ENCODE measurements at regions of chr12 and their contacts with region 1.

Region 1: GRCh38 chr12:614411-614970 is 48.8 kb downstream of the NINJ2 start:
- DNase-seq: peak; percentile 62
- ATAC-seq: peak; percentile 68
- H3K4me3 ChIP-seq: no peak overlapping the region
- H3K4me3 Mint-ChIP-seq: no peak overlapping the region
- H3K27ac ChIP-seq: no peak overlapping the region
- H3K27ac Mint-ChIP-seq: no peak overlapping the region
- H3K4me1 ChIP-seq: peaks cover 20 to 21% of the 10 kb centered on the region in 2 donors
- H3K4me1 Mint-ChIP-seq: peaks cover 24% of the 10 kb centered on the region
- H3K27me3 ChIP-seq: no peaks in the 10 kb centered on the region
- H3K27me3 Mint-ChIP-seq: no peaks in the 10 kb centered on the region
- CTCF ChIP-seq: peak; percentile 45

Region 2: GRCh38 chr12:321607-322326 is 292.7 kb before region 1 on chr12:
- CTCF ChIA-PET with region 1: no interaction called
- POLR2A ChIA-PET with region 1: no interaction called
- intact Hi-C with region 1: no loop called
- DNase-seq: no peak
- ATAC-seq: no peak
- H3K4me3 ChIP-seq: no peak overlapping the region
- H3K4me3 Mint-ChIP-seq: no peak overlapping the region
- H3K27ac ChIP-seq: no peak overlapping the region
- H3K27ac Mint-ChIP-seq: no peak overlapping the region
- H3K4me1 ChIP-seq: no peaks in the 10 kb centered on the region
- H3K4me1 Mint-ChIP-seq: no peaks in the 10 kb centered on the region
- H3K27me3 ChIP-seq: no peaks in the 10 kb centered on the region
- H3K27me3 Mint-ChIP-seq: no peaks in the 10 kb centered on the region
- CTCF ChIP-seq: no peak

Region 3: DNA sequence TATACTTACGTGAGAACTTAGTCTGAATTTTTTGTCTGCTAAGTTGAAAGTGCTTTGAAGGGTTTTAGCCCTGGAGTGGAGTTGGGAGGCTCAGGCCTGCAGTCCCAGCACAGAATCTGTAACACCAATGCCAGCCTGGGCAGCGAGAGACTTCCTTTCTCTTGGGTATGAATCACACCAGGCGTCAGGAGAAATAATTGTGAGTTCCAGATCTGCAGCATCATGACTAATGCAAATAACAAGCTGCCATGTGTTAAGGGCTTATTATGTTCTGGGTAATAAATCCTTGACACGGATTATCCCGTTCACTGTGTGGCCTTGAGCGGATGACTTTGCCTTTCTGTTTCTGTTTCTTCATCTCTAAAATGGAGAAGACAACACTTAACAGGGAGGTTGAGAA is 84.2 kb before region 1 on chr12:
- CTCF ChIA-PET with region 1: no interaction called
- POLR2A ChIA-PET with region 1: no interaction called
- intact Hi-C with region 1: no loop called
- DNase-seq: no peak
- ATAC-seq: no peak
- H3K4me3 ChIP-seq: no peak overlapping the region
- H3K4me3 Mint-ChIP-seq: no peak overlapping the region
- H3K27ac ChIP-seq: no peak overlapping the region
- H3K27ac Mint-ChIP-seq: no peak overlapping the region
- H3K4me1 ChIP-seq: no peaks in the 10 kb centered on the region
- H3K4me1 Mint-ChIP-seq: no peaks in the 10 kb centered on the region
- H3K27me3 ChIP-seq: peaks cover 0 to 3% (median 0%) of the 10 kb centered on the region in 4 experiments
- H3K27me3 Mint-ChIP-seq: peaks cover 14% of the 10 kb centered on the region
- CTCF ChIP-seq: no peak

Region 4: DNA sequence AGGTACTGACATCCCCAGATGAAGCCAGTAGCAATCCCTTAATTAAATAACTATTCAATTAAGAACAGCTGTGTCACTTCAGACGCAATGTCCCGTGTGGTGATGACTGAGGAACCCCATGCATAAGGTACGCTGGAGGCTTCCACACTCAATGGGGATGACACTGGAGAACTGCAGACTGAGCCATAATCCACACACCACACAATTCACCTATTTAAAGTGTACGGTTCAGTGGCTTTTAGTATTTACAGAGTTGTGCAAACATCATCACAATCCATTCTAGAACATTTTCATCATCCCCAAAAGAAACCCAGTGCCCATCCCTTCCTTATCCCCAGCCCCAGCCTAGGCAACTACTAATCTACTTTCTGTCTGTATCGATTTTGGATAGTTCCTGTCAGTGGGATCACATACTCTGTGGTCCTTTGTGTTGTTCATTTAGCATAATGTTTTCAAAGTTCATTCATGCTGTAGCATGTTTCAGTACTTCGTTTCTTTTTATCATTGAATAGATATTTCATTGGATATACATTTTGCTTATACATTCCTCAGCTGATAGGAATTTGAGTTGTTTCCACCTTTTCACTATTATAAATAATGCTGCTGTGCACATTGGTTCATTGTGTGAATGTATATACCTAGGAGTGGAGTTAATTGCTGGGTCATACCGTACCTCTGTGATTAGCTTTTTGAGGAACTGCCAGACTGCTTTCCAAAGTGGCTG is 12.4 kb before region 1 on chr12:
- CTCF ChIA-PET with region 1: interaction called, 18 read pairs
- POLR2A ChIA-PET with region 1: no interaction called
- intact Hi-C with region 1: no loop called
- DNase-seq: no peak
- ATAC-seq: no peak
- H3K4me3 ChIP-seq: no peak overlapping the region
- H3K4me3 Mint-ChIP-seq: no peak overlapping the region
- H3K27ac ChIP-seq: no peak overlapping the region
- H3K27ac Mint-ChIP-seq: no peak overlapping the region
- H3K4me1 ChIP-seq: no peaks in the 10 kb centered on the region
- H3K4me1 Mint-ChIP-seq: no peaks in the 10 kb centered on the region
- H3K27me3 ChIP-seq: no peaks in the 10 kb centered on the region
- H3K27me3 Mint-ChIP-seq: no peaks in the 10 kb centered on the region
- CTCF ChIP-seq: no peak

Region 5: DNA sequence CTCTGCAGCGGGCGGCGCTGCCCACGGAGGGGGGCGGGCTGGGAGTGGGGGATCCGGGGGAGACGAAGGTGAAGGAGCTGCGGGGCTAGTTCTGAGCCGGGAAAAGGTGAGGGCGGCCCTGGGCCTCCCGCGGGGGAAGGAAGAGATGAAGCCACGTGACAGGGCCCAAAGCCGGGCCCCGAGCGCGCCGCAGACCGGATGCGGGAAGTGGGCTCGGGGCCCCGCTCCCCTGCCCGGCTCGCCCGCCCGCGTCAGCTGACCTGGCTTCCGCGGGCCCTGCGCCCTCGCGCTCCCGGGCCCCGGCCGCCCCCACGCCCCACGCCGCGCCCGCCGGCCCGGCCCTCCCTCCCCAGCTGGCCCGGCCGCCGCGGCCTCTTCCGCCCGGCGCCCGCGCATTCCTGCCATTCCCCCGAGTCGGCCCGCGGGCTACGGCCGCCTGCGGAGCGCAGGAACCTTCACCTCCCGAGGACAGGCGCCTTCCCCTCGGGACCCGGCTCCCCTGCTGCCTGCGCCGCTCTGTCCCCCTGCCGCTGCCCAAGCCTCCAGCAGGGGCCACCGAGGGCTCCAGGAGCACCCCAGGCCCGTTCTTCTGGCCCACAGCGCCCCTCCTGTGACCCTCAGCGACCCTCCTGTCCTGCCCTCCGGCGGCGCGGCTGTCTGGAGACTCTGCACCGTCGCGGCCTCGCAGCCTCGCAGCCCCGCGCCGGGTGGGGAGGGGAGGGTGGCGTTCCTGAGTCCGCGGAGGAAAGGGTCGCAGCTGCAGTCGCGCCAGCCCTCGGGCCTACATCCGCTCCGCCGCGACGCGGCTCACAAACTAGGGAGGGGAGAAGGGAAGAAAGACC is 28.4 kb after region 1 on chr12:
- CTCF ChIA-PET with region 1: interaction called, 11 read pairs
- POLR2A ChIA-PET with region 1: no interaction called
- intact Hi-C with region 1: no loop called
- DNase-seq: peak; percentile 86
- ATAC-seq: peak; percentile 75
- H3K4me3 ChIP-seq: peak overlapping the region; percentile 56 to 80 (median 78)
- H3K4me3 Mint-ChIP-seq: peak overlapping the region; percentile 89
- H3K27ac ChIP-seq: peak overlapping the region; percentile 94 to 96
- H3K27ac Mint-ChIP-seq: peak overlapping the region; percentile 99
- H3K4me1 ChIP-seq: peaks cover 28 to 43% of the 10 kb centered on the region in 2 donors
- H3K4me1 Mint-ChIP-seq: peaks cover 51% of the 10 kb centered on the region
- H3K27me3 ChIP-seq: no peaks in the 10 kb centered on the region
- H3K27me3 Mint-ChIP-seq: no peaks in the 10 kb centered on the region
- CTCF ChIP-seq: peak; percentile 43

Region 6: DNA sequence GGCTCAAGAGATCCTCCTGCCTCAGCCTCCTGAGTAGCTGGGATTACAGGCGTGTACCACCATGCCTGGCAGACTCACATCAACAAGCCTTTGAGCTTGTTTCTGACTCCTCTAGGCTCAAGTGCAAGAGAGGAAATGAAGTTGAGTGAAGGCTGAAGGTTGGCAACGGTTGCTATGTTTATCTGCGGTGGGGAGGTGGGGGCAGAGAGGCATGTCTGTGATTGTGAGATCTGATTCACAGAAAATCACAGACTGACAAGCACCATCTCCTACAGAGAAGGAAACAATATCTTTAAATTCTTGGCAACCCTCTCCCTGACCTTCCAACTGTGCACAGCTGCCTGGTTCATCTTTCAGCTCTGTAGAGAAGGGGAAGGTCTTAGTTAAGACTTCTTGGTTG is 70.9 kb after region 1 on chr12:
- CTCF ChIA-PET with region 1: interaction called, 14 read pairs
- POLR2A ChIA-PET with region 1: interaction called, 3 read pairs
- intact Hi-C with region 1: no loop called
- DNase-seq: peak; percentile 93
- ATAC-seq: peak; percentile 78
- H3K4me3 ChIP-seq: peak overlapping the region in 4 of 5 experiments; percentile 5 to 31 (median 21)
- H3K4me3 Mint-ChIP-seq: peak overlapping the region; percentile 75
- H3K27ac ChIP-seq: peak overlapping the region; percentile 93 to 98
- H3K27ac Mint-ChIP-seq: peak overlapping the region; percentile 100
- H3K4me1 ChIP-seq: peaks cover 45 to 53% of the 10 kb centered on the region in 2 donors
- H3K4me1 Mint-ChIP-seq: peaks cover 49% of the 10 kb centered on the region
- H3K27me3 ChIP-seq: no peaks in the 10 kb centered on the region
- H3K27me3 Mint-ChIP-seq: no peaks in the 10 kb centered on the region
- CTCF ChIP-seq: no peak

Region 7: GRCh38 chr12:823028-823698 is 208.7 kb after region 1 on chr12:
- CTCF ChIA-PET with region 1: interaction called, 132 read pairs
- POLR2A ChIA-PET with region 1: no interaction called
- intact Hi-C with region 1: no loop called
- DNase-seq: peak; percentile 78
- ATAC-seq: peak; percentile 94
- H3K4me3 ChIP-seq: no peak overlapping the region
- H3K4me3 Mint-ChIP-seq: peak overlapping the region; percentile 1
- H3K27ac ChIP-seq: peak overlapping the region; percentile 40 to 57
- H3K27ac Mint-ChIP-seq: peak overlapping the region; percentile 32
- H3K4me1 ChIP-seq: peaks cover 16 to 23% of the 10 kb centered on the region in 2 donors
- H3K4me1 Mint-ChIP-seq: peaks cover 35% of the 10 kb centered on the region
- H3K27me3 ChIP-seq: no peaks in the 10 kb centered on the region
- H3K27me3 Mint-ChIP-seq: no peaks in the 10 kb centered on the region
- CTCF ChIP-seq: no peak

Measured in B cell (primary cell).